ENCODE measurements at regions of chr12 and their contacts with region 1.

Region 1: GRCh38 chr12:53625946-53626701 is at the start of gene ATF7:
- DNase-seq: peak; percentile 93
- H3K4me3 ChIP-seq: peak within 1 kb of the TSS; percentile 75 to 77
- H3K27ac ChIP-seq: peak within 1 kb of the TSS; percentile 91 to 96
- H3K4me1 ChIP-seq: peaks cover 5% of the 10 kb centered on the region in 2 experiments; a peak in 3 of 4 replicates
- H3K27me3 ChIP-seq: no peaks in the 10 kb centered on the region
- CTCF ChIP-seq: no peak
- EP300 ChIP-seq: no peak; a peak in 2 of 4 replicates
- RAD21 ChIP-seq: peak; percentile 23; the same call in 1 of the 2 replicates
- polyA plus RNA-seq, gene ATF7: 12.8 and 17.3 TPM in 2 replicates

Region 2: GRCh38 chr12:53413485-53414204 is 212.5 kb before region 1 on chr12:
- CTCF ChIA-PET with region 1: no interaction called
- POLR2A ChIA-PET with region 1: no interaction called
- DNase-seq: no peak
- H3K4me3 ChIP-seq: no peak overlapping the region; a peak in 1 of 4 replicates
- H3K27ac ChIP-seq: peak overlapping the region; percentile 73 to 99
- H3K4me1 ChIP-seq: peaks cover 44 to 47% of the 10 kb centered on the region in 2 experiments
- H3K27me3 ChIP-seq: no peaks in the 10 kb centered on the region
- CTCF ChIP-seq: no peak
- EP300 ChIP-seq: no peak
- RAD21 ChIP-seq: no peak

Region 3: GRCh38 chr12:53613821-53614220 is 12.3 kb before region 1 on chr12:
- CTCF ChIA-PET with region 1: interaction called, 21 read pairs
- POLR2A ChIA-PET with region 1: no interaction called
- DNase-seq: no peak
- H3K4me3 ChIP-seq: no peak overlapping the region
- H3K27ac ChIP-seq: no peak overlapping the region; a peak in 1 of 4 replicates
- H3K4me1 ChIP-seq: peaks cover 0 to 5% of the 10 kb centered on the region in 2 experiments; a peak in 1 of 4 replicates
- H3K27me3 ChIP-seq: no peaks in the 10 kb centered on the region
- CTCF ChIP-seq: no peak
- EP300 ChIP-seq: no peak
- RAD21 ChIP-seq: no peak

Measured in SK-N-SH (cell line).